CD8-positive, alpha-beta T cell (primary cell): ENCODE measurements at regions of chr3 and their contacts with region 1.

Region 1: DNA sequence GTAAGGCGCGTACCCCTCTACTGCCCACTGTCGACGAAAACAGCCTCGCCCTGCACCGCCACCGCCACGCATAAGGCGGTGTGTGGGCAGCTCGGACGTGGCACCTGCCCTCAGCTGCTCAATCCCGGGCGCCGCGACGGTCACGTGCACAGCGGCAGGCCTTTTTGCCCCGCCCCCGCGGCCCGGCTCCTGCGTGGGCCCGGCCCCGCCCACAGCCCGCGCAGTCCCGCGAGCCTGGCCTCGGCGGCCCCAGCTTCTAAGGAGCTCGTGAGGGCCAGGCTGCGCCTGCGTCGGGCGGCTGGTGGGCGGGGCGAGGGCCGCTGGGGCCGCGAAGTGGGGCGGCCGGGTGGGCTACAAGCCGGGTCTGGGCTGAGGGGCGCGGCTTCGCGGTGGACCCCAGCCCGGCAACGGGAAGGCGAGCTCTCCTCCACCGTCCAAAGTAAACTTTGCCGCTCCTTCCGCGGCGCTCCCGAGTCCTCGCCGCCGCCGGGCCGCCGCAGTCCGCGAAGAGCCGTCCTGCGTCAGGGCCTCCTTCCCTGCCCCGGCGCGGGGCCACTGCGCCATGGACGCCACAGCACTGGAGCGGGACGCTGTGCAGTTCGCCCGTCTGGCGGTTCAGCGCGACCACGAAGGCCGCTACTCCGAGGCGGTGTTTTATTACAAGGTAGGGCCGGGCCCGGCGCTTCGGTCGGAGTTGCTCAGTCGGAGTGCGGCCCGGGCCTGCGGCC is at the start of gene CAPN7:
- DNase-seq: peak; percentile 88 to 98 (median 93)
- ATAC-seq: peak; percentile 91
- H3K4me3 ChIP-seq: peak within 1 kb of the TSS; percentile 79 to 82
- H3K4me3 Mint-ChIP-seq: peak within 1 kb of the TSS; percentile 89
- H3K27ac ChIP-seq: peak within 1 kb of the TSS; percentile 85 to 88
- H3K27ac Mint-ChIP-seq: peak within 1 kb of the TSS; percentile 87
- H3K4me1 ChIP-seq: peaks cover 21% of the 10 kb centered on the region
- H3K4me1 Mint-ChIP-seq: peaks cover 32% of the 10 kb centered on the region
- H3K27me3 ChIP-seq: no peaks in the 10 kb centered on the region
- H3K27me3 Mint-ChIP-seq: no peaks in the 10 kb centered on the region
- CTCF ChIP-seq: no peak
- total RNA-seq, gene CAPN7: 59.7 to 62.6 TPM

Region 2: DNA sequence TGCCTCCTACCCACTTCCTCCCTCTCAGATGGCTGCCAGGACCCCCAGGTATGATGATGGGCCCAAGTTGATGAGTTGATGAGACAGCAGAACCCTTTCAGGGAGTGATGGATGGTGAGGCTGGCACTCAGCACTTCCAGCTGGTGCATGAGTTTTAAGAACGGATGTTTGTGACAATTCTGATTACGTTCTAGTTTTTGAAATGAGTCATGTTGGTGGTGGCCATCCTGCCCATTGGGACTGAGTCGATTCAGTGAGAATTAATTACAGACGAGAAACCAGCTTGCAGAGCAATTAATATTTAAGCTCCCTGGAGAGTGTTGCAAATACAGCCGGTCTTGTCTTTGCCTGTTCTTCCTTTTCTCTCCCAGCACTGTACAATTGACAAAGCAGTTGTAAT is 315.6 kb before region 1 on chr3:
- CTCF ChIA-PET with region 1: no interaction called
- POLR2A ChIA-PET with region 1: no interaction called
- intact Hi-C with region 1: no loop called
- DNase-seq: no peak
- ATAC-seq: no peak
- H3K4me3 ChIP-seq: no peak overlapping the region
- H3K4me3 Mint-ChIP-seq: no peak overlapping the region
- H3K27ac ChIP-seq: no peak overlapping the region
- H3K27ac Mint-ChIP-seq: no peak overlapping the region
- H3K4me1 ChIP-seq: peaks cover 9% of the 10 kb centered on the region
- H3K4me1 Mint-ChIP-seq: peaks cover 5% of the 10 kb centered on the region
- H3K27me3 ChIP-seq: no peaks in the 10 kb centered on the region
- H3K27me3 Mint-ChIP-seq: peaks cover 4% of the 10 kb centered on the region
- CTCF ChIP-seq: no peak

Region 3: GRCh38 chr3:15098503-15099363 is 107.4 kb before region 1 on chr3 and contains the start of gene RBSN:
- CTCF ChIA-PET with region 1: no interaction called
- POLR2A ChIA-PET with region 1: interaction called, 10 read pairs
- intact Hi-C with region 1: loop called (anchors 1 kb)
- DNase-seq: peak; percentile 87 to 98 (median 94)
- ATAC-seq: peak; percentile 76
- H3K4me3 ChIP-seq: peak within 1 kb of the TSS; percentile 71 to 76
- H3K4me3 Mint-ChIP-seq: peak within 1 kb of the TSS; percentile 88
- H3K27ac ChIP-seq: peak within 1 kb of the TSS; percentile 96 to 98
- H3K27ac Mint-ChIP-seq: peak within 1 kb of the TSS; percentile 95
- H3K4me1 ChIP-seq: peaks cover 16% of the 10 kb centered on the region
- H3K4me1 Mint-ChIP-seq: peaks cover 31% of the 10 kb centered on the region
- H3K27me3 ChIP-seq: no peaks in the 10 kb centered on the region
- H3K27me3 Mint-ChIP-seq: no peaks in the 10 kb centered on the region
- CTCF ChIP-seq: no peak
- total RNA-seq, gene RBSN: 41.9 to 48.1 TPM

Region 4: DNA sequence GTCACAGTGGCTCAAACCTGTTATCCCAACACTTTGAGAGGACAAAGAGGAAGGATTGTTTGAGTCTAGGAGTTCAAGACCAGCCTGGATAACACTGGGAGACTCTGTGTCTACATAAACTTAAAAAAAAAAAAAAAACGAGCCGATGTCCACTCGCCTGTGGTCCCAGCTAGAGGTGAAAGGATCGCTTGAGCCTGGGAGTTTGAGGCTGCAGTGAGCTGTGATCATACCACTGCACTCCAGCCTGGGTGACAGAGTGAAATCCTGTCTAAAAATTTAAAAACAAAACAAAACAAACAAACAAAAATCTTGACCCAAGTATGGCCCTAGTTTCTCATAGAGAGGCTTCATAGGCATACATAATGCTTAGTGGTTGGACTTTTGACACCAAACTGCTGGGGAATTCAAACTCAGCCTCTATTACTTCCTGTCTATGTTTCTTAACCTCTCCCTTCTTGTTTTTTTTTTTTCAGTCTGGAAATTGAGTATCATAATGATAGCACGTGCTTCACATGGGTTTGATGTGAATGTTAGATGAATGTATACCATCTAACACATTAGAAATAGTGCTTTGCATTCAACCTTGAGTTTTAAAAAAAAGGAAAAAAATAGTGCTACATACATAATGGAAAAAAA is 46.5 kb before region 1 on chr3:
- CTCF ChIA-PET with region 1: no interaction called
- POLR2A ChIA-PET with region 1: no interaction called
- intact Hi-C with region 1: no loop called
- DNase-seq: peak in 1 of 9 experiments; percentile 11
- ATAC-seq: no peak
- H3K4me3 ChIP-seq: no peak overlapping the region
- H3K4me3 Mint-ChIP-seq: no peak overlapping the region
- H3K27ac ChIP-seq: no peak overlapping the region
- H3K27ac Mint-ChIP-seq: no peak overlapping the region
- H3K4me1 ChIP-seq: no peaks in the 10 kb centered on the region
- H3K4me1 Mint-ChIP-seq: peaks cover 4% of the 10 kb centered on the region
- H3K27me3 ChIP-seq: peaks cover 0 to 4% of the 10 kb centered on the region in 2 experiments
- H3K27me3 Mint-ChIP-seq: peaks cover 25% of the 10 kb centered on the region
- CTCF ChIP-seq: no peak

Region 5: GRCh38 chr3:15377961-15378791 is 172.1 kb after region 1 on chr3:
- CTCF ChIA-PET with region 1: interaction called, 6 read pairs
- POLR2A ChIA-PET with region 1: no interaction called
- intact Hi-C with region 1: loop called (anchors 1 kb)
- DNase-seq: peak; percentile 88 to 97 (median 93)
- ATAC-seq: peak; percentile 97
- H3K4me3 ChIP-seq: no peak overlapping the region
- H3K4me3 Mint-ChIP-seq: no peak overlapping the region
- H3K27ac ChIP-seq: peak overlapping the region; percentile 55 to 90
- H3K27ac Mint-ChIP-seq: peak overlapping the region; percentile 89
- H3K4me1 ChIP-seq: peaks cover 5% of the 10 kb centered on the region
- H3K4me1 Mint-ChIP-seq: peaks cover 8% of the 10 kb centered on the region
- H3K27me3 ChIP-seq: no peaks in the 10 kb centered on the region
- H3K27me3 Mint-ChIP-seq: no peaks in the 10 kb centered on the region
- CTCF ChIP-seq: peak; percentile 85

Region 6: GRCh38 chr3:15427182-15427880 is 221.2 kb after region 1 on chr3 and contains the starts of genes EAF1 and METTL6:
- CTCF ChIA-PET with region 1: no interaction called
- POLR2A ChIA-PET with region 1: interaction called, 4 read pairs
- intact Hi-C with region 1: loop called (anchors 1 to 5 kb)
- DNase-seq: peak; percentile 64 to 90 (median 86)
- ATAC-seq: peak; percentile 82
- H3K4me3 ChIP-seq: peak within 1 kb of the TSS; percentile 87 to 96
- H3K4me3 Mint-ChIP-seq: peak within 1 kb of the TSS; percentile 99
- H3K27ac ChIP-seq: peak within 1 kb of the TSS; percentile 81
- H3K27ac Mint-ChIP-seq: peak within 1 kb of the TSS; percentile 98
- H3K4me1 ChIP-seq: peaks cover 43% of the 10 kb centered on the region
- H3K4me1 Mint-ChIP-seq: peaks cover 66% of the 10 kb centered on the region
- H3K27me3 ChIP-seq: no peaks in the 10 kb centered on the region
- H3K27me3 Mint-ChIP-seq: no peaks in the 10 kb centered on the region
- CTCF ChIP-seq: peak; percentile 24
- total RNA-seq, gene EAF1: 33.7 to 36.0 TPM
- total RNA-seq, gene METTL6: 4.1 to 4.9 TPM

Region 7: GRCh38 chr3:15859507-15860013 is 653.5 kb after region 1 on chr3:
- CTCF ChIA-PET with region 1: no interaction called
- POLR2A ChIA-PET with region 1: no interaction called
- intact Hi-C with region 1: loop called in 1 of 2 experiments (anchors 2 kb)
- DNase-seq: peak; percentile 42 to 88 (median 73)
- ATAC-seq: peak; percentile 78
- H3K4me3 ChIP-seq: peak overlapping the region; percentile 73 to 86
- H3K4me3 Mint-ChIP-seq: peak overlapping the region; percentile 97
- H3K27ac ChIP-seq: peak overlapping the region in 1 of 2 experiments; percentile 46
- H3K27ac Mint-ChIP-seq: peak overlapping the region; percentile 95
- H3K4me1 ChIP-seq: peaks cover 20% of the 10 kb centered on the region
- H3K4me1 Mint-ChIP-seq: peaks cover 35% of the 10 kb centered on the region
- H3K27me3 ChIP-seq: no peaks in the 10 kb centered on the region
- H3K27me3 Mint-ChIP-seq: no peaks in the 10 kb centered on the region
- CTCF ChIP-seq: no peak